ENCODE measurements at regions of chr5 and their contacts with region 1.

Region 1: GRCh38 chr5:80204808-80205614 is 50.8 kb downstream of the SERINC5 start:
- DNase-seq: peak; percentile 58
- H3K4me3 ChIP-seq: no peak overlapping the region
- H3K27ac ChIP-seq: peak overlapping the region in 1 of 2 experiments; percentile 99; a peak in 2 of 4 replicates
- H3K4me1 ChIP-seq: peaks cover 0 to 25% of the 10 kb centered on the region in 2 experiments; a peak in 2 of 4 replicates
- H3K27me3 ChIP-seq: no peaks in the 10 kb centered on the region
- CTCF ChIP-seq: no peak
- EP300 ChIP-seq: peak in 1 of 2 experiments; percentile 75; a peak in 2 of 4 replicates
- RAD21 ChIP-seq: peak; percentile 60

Region 2: GRCh38 chr5:80161165-80161564 is 43.8 kb before region 1 on chr5:
- CTCF ChIA-PET with region 1: no interaction called
- POLR2A ChIA-PET with region 1: no interaction called
- DNase-seq: no peak
- H3K4me3 ChIP-seq: no peak overlapping the region
- H3K27ac ChIP-seq: no peak overlapping the region
- H3K4me1 ChIP-seq: no peaks in the 10 kb centered on the region
- H3K27me3 ChIP-seq: no peaks in the 10 kb centered on the region
- CTCF ChIP-seq: no peak
- EP300 ChIP-seq: no peak
- RAD21 ChIP-seq: no peak

Region 3: GRCh38 chr5:80238097-80238496 is 33.1 kb after region 1 on chr5:
- CTCF ChIA-PET with region 1: no interaction called
- POLR2A ChIA-PET with region 1: no interaction called
- DNase-seq: no peak
- H3K4me3 ChIP-seq: no peak overlapping the region
- H3K27ac ChIP-seq: no peak overlapping the region
- H3K4me1 ChIP-seq: peaks cover 15 to 17% of the 10 kb centered on the region in 2 experiments; a peak in 3 of 4 replicates
- H3K27me3 ChIP-seq: no peaks in the 10 kb centered on the region
- CTCF ChIP-seq: no peak
- EP300 ChIP-seq: no peak
- RAD21 ChIP-seq: no peak

Region 4: GRCh38 chr5:80255732-80256479 is 50.9 kb after region 1 on chr5 and contains the start of gene SERINC5:
- CTCF ChIA-PET with region 1: interaction called, 17 read pairs
- POLR2A ChIA-PET with region 1: interaction called, 11 read pairs
- DNase-seq: peak; percentile 97
- H3K4me3 ChIP-seq: peak within 1 kb of the TSS; percentile 79 to 94
- H3K27ac ChIP-seq: peak within 1 kb of the TSS; percentile 84 to 90
- H3K4me1 ChIP-seq: peaks cover 11 to 12% of the 10 kb centered on the region in 2 experiments
- H3K27me3 ChIP-seq: no peaks in the 10 kb centered on the region
- CTCF ChIP-seq: no peak
- EP300 ChIP-seq: no peak
- RAD21 ChIP-seq: no peak
- polyA plus RNA-seq, gene SERINC5: 4.5 and 7.4 TPM in 2 replicates

Region 5: DNA sequence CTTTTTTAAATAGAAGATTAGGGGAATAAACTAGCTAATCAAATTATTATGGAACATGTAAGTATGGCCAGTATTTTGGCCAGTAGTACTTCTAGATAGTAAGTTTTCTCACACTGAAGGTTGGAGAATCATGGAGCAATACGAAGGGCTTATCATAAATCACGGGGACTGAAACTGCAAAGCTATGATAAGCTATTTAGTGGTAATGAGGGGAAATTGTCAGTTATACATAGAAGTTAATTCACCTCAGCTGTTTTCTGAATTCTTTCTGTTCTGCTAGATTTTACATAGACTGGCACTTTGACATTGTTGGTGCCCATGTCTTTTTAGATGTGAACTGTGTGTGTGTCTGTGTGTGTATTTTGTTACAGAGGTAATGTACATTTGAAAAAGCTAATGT is 248.4 kb after region 1 on chr5:
- CTCF ChIA-PET with region 1: no interaction called
- POLR2A ChIA-PET with region 1: no interaction called
- DNase-seq: peak; percentile 16
- H3K4me3 ChIP-seq: no peak overlapping the region
- H3K27ac ChIP-seq: no peak overlapping the region
- H3K4me1 ChIP-seq: peaks cover 0 to 2% of the 10 kb centered on the region in 2 experiments; a peak in 1 of 4 replicates
- H3K27me3 ChIP-seq: no peaks in the 10 kb centered on the region
- CTCF ChIP-seq: no peak
- EP300 ChIP-seq: no peak
- RAD21 ChIP-seq: no peak